ENCODE measurements at regions of chr16 and their contacts with region 1.

Region 1: GRCh38 chr16:10521681-10522274 is 58.6 kb downstream of the EMP2 start:
- DNase-seq: peak; percentile 42
- H3K4me3 Mint-ChIP-seq: no peak overlapping the region
- H3K27ac Mint-ChIP-seq: no peak overlapping the region
- H3K4me1 Mint-ChIP-seq: peaks cover 2% of the 10 kb centered on the region
- H3K27me3 Mint-ChIP-seq: peaks cover 3% of the 10 kb centered on the region

Region 2: GRCh38 chr16:10737068-10737625 is 215.4 kb after region 1 on chr16:
- CTCF ChIA-PET with region 1: interaction called, 10 read pairs
- POLR2A ChIA-PET with region 1: no interaction called
- DNase-seq: peak; percentile 78
- H3K4me3 Mint-ChIP-seq: peak overlapping the region; percentile 28
- H3K27ac Mint-ChIP-seq: peak overlapping the region; percentile 41
- H3K4me1 Mint-ChIP-seq: peaks cover 48% of the 10 kb centered on the region
- H3K27me3 Mint-ChIP-seq: no peaks in the 10 kb centered on the region

Measured in activated CD4-positive, alpha-beta memory T cell treated with anti-CD3 and anti-CD28 coated beads, Interleukin-2, amount 10 ng/mL, durations not matched to agents 7 days and 5 days (primary cell).